Activated naive CD4-positive, alpha-beta T cell treated with anti-CD3 and anti-CD28 coated beads, Interleukin-2, amount 10 ng/mL, durations not matched to agents 7 days and 5 days (primary cell): ENCODE measurements at regions of chr12 and their contacts with region 1.

Region 1: GRCh38 chr12:57836442-57837375 is 9.8 kb downstream of the CTDSP2 start:
- DNase-seq: peak; percentile 71
- H3K4me3 Mint-ChIP-seq: peak overlapping the region; percentile 46
- H3K27ac Mint-ChIP-seq: peak overlapping the region; percentile 86
- H3K4me1 Mint-ChIP-seq: peaks cover 92% of the 10 kb centered on the region
- H3K27me3 Mint-ChIP-seq: no peaks in the 10 kb centered on the region

Region 2: GRCh38 chr12:57476162-57476992 is 360.3 kb before region 1 on chr12:
- CTCF ChIA-PET with region 1: no interaction called
- DNase-seq: peak; percentile 89
- H3K4me3 Mint-ChIP-seq: peak overlapping the region; percentile 99
- H3K27ac Mint-ChIP-seq: peak overlapping the region; percentile 99
- H3K4me1 Mint-ChIP-seq: peaks cover 75% of the 10 kb centered on the region
- H3K27me3 Mint-ChIP-seq: no peaks in the 10 kb centered on the region

Region 3: DNA sequence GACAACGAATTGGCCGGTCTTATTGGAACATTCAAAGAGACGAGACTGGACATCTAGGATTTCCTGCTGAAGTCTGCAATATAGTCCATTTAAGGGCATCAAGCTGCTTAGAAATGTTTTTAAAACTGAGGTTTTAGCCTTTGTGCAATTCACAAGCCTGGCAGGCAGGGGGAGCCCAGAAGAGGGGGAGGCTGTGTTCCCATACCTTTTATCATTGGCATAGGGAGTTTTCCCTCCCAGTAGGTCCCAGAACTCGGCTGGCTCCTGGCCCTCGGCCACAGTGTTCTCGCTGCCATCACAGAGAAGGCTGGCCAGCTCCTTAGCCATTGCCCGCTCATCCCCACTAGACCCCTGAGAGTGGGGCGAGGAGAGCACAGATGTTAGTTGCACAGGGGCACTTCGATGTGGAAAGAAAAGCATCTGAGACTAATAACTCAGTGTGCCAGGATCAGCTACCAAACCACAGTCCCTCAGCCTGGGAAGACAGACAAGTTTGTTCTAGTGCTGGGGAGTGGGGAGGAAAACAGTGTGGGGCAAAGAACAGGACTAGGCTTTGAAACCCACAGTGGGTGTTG is 33.3 kb before region 1 on chr12:
- CTCF ChIA-PET with region 1: interaction called, 14 read pairs
- DNase-seq: peak; percentile 60
- H3K4me3 Mint-ChIP-seq: no peak overlapping the region
- H3K27ac Mint-ChIP-seq: no peak overlapping the region
- H3K4me1 Mint-ChIP-seq: no peaks in the 10 kb centered on the region
- H3K27me3 Mint-ChIP-seq: no peaks in the 10 kb centered on the region

Region 4: GRCh38 chr12:57846577-57847319 is 10.0 kb after region 1 on chr12 and contains the start of gene CTDSP2:
- CTCF ChIA-PET with region 1: interaction called, 14 read pairs
- DNase-seq: peak; percentile 94
- H3K4me3 Mint-ChIP-seq: peak within 1 kb of the TSS; percentile 84
- H3K27ac Mint-ChIP-seq: peak within 1 kb of the TSS; percentile 82
- H3K4me1 Mint-ChIP-seq: peaks cover 39% of the 10 kb centered on the region
- H3K27me3 Mint-ChIP-seq: peaks cover 45% of the 10 kb centered on the region

Region 5: DNA sequence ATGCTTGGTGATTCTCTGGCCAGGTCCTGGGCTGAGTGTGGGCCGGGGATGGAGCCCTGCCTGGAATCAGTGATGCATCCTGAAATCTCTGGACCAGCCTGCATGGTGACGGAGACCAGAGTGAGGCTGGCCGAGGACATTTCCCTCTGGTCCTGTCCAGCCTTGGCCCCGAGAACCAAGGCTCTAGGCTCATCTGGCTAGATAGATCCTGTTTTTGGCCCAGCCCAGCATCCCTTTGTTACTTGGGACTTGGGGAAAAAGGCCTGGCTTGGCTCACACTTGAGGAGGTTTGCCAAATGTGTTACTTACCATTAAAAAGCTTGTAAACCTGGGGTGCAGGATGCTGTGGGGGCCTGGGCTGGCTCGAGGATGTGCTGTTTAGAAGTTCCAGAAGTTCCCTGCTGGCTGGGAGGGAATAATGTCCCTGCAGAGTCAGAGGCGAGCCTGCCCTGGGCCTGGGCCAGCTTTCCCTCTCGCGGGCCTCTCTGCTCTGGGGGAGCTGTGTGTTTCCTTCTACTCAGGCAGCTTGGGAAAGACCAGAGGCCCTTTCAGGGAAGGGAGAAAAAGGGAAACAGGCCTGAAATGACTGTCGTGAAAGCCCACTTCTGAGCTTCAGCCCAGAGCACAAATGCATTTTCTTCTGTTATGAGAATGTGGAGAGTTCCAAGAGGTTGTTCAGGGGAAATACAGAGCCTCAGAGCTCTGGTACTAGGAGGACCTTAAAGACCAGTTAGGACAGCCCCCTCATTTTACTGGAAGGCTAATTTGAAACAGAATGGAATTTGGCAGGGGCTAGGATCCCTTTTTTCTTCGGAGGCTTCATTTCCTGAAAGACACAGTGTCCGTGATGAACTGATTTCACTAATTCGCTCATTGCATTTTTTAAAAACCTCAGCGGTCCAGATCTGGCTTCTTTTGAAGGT is 57.0 kb after region 1 on chr12:
- CTCF ChIA-PET with region 1: interaction called, 15 read pairs
- DNase-seq: no peak
- H3K4me3 Mint-ChIP-seq: no peak overlapping the region
- H3K27ac Mint-ChIP-seq: no peak overlapping the region
- H3K4me1 Mint-ChIP-seq: peaks cover 52% of the 10 kb centered on the region
- H3K27me3 Mint-ChIP-seq: peaks cover 27% of the 10 kb centered on the region

Region 6: DNA sequence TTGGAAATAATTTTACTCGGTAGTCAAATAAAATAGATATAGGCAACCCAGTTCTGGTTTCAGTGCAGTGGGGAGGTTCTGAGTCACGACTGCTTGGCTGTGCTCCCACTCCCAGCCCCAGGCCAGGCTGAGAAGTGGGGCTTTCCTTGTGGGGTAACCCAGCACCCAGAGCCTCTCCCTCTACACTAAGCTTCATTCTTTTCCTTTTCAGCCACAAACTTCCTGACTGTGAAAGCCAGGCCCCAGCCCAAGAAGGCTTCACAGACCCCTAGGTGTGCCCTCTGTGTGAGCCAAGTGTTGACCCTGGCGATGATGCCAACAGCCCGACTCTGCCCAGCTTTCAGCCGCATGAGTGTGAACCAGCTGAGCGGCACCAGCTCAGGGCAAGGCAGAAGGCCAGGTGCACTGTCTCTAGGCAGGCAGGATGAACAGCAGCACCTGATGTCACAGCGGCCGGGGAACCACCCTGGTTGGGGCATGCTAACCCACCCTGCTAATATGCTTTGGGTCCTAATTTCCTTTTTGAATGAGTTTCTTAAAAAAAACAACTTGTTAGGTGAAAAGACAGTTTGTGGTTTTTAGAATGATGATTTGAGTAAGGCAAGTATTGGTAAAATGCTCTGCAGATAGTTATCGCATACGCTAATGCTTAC is 62.4 kb after region 1 on chr12:
- CTCF ChIA-PET with region 1: interaction called, 107 read pairs
- DNase-seq: peak; percentile 76
- H3K4me3 Mint-ChIP-seq: peak overlapping the region; percentile 39
- H3K27ac Mint-ChIP-seq: peak overlapping the region; percentile 93
- H3K4me1 Mint-ChIP-seq: peaks cover 55% of the 10 kb centered on the region
- H3K27me3 Mint-ChIP-seq: peaks cover 14% of the 10 kb centered on the region